Thyroid gland (tissue), 4 donors: ENCODE measurements at regions of chr12 and their contacts with region 1.

Region 1: DNA sequence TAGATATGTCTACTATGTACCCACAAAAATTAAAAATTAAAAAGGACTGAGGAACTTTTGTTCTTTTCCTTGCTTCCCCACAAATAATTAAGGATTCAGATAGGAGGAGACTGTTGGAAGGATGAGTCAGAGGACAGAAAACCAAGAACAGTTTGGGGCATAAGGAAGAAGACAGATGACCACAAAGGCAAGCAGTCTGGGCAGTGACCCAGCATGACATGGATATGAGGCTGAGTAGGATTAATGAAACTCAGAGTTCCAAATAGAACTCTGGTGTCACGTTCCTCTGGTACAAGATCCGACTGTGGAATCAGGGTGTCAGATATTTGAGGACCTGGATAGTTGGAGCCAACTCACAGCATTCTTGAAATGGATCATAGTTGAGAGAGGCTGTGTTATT is 89.3 kb upstream of the SLC38A4 start:
- DNase-seq: no peak
- H3K4me3 ChIP-seq: no peak overlapping the region
- H3K27ac ChIP-seq: no peak overlapping the region
- H3K4me1 ChIP-seq: no peaks in the 10 kb centered on the region
- H3K27me3 ChIP-seq: no peaks in the 10 kb centered on the region
- CTCF ChIP-seq: no peak
- POLR2A ChIP-seq: no peak

Region 2: GRCh38 chr12:46627686-46628085 is 287.4 kb before region 1 on chr12:
- intact Hi-C with region 1: no loop called
- DNase-seq: no peak
- H3K4me3 ChIP-seq: no peak overlapping the region
- H3K27ac ChIP-seq: no peak overlapping the region
- H3K4me1 ChIP-seq: no peaks in the 10 kb centered on the region
- H3K27me3 ChIP-seq: no peaks in the 10 kb centered on the region
- CTCF ChIP-seq: no peak
- POLR2A ChIP-seq: no peak

Region 3: GRCh38 chr12:46874642-46875041 is 40.4 kb before region 1 on chr12:
- intact Hi-C with region 1: no loop called
- DNase-seq: no peak
- H3K4me3 ChIP-seq: no peak overlapping the region
- H3K27ac ChIP-seq: no peak overlapping the region
- H3K4me1 ChIP-seq: no peaks in the 10 kb centered on the region
- H3K27me3 ChIP-seq: no peaks in the 10 kb centered on the region
- CTCF ChIP-seq: no peak
- POLR2A ChIP-seq: no peak

Region 4: GRCh38 chr12:46895726-46896125 is 19.4 kb before region 1 on chr12:
- intact Hi-C with region 1: loop called (anchors 1 kb)
- DNase-seq: no peak
- H3K4me3 ChIP-seq: no peak overlapping the region
- H3K27ac ChIP-seq: no peak overlapping the region
- H3K4me1 ChIP-seq: no peaks in the 10 kb centered on the region
- H3K27me3 ChIP-seq: no peaks in the 10 kb centered on the region
- CTCF ChIP-seq: no peak
- POLR2A ChIP-seq: no peak

Region 5: GRCh38 chr12:47236109-47236714 is 321.1 kb after region 1 on chr12:
- intact Hi-C with region 1: no loop called
- DNase-seq: no peak
- H3K4me3 ChIP-seq: no peak overlapping the region
- H3K27ac ChIP-seq: no peak overlapping the region
- H3K4me1 ChIP-seq: no peaks in the 10 kb centered on the region
- H3K27me3 ChIP-seq: no peaks in the 10 kb centered on the region
- CTCF ChIP-seq: no peak
- POLR2A ChIP-seq: no peak